Heart left ventricle (tissue), 16 donors: ENCODE measurements at regions of chr9 and their contacts with region 1.

Region 1: DNA sequence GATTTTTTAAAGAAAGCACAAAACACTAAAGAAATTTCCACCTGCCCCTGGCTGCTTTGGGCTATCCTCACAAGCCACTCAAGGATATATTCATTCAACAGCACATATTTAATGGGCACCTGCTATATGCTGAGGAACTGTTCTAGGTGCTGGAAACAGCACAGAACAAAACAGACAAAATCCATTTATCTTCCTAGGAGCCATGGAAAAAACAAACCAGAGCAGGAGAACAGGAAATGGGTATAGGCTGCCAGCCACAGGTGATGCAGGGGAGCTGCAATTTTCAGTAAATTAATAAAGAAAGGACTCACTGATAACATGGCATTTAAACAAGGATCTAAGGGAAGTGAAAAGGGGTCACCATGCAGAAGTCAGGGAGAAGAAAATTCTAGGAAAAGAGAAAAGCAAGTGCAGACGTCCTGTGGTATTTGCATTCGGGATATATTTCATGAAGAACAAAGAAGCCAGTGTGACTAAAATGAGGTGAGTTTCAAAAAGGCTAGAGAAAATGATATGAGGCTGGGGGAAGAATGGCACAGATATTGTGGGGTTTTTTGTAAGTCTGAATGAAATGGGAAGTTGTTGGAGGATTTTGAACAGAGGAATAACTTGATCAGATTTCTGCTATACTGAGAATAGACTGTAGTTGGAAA is 152.2 kb downstream of the ADAMTSL1 start:
- DNase-seq: no peak
- ATAC-seq: no peak
- H3K4me3 ChIP-seq: no peak overlapping the region
- H3K27ac ChIP-seq: no peak overlapping the region
- H3K4me1 ChIP-seq: peaks cover 0 to 13% (median 0%) of the 10 kb centered on the region in 12 donors
- H3K27me3 ChIP-seq: no peaks in the 10 kb centered on the region
- CTCF ChIP-seq: peak in 1 of 12 donors; percentile 48
- POLR2A ChIP-seq: no peak

Region 2: DNA sequence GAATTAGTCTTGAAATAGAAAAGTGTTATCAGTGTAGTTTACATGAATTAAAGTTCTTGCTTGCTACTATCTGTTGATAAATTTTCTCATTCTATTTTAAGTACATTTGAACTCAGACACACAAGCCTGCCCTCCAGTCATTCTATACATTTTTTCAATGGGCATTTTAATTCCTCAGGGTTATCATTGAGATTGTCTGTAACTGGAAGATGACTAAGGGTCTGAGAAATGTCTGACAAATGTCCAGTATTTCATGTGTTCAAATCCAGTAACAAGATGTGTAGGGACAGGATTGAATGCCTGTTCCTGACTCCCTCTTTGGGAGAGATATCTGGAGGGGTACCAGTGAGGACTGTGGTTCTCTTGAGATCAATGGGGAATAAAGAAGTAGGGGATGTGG is 376.1 kb before region 1 on chr9:
- intact Hi-C with region 1: loop called in 1 of 10 experiments (anchors 5 kb)
- DNase-seq: no peak
- ATAC-seq: no peak
- H3K4me3 ChIP-seq: no peak overlapping the region
- H3K27ac ChIP-seq: no peak overlapping the region
- H3K4me1 ChIP-seq: no peaks in the 10 kb centered on the region
- H3K27me3 ChIP-seq: no peaks in the 10 kb centered on the region
- CTCF ChIP-seq: no peak
- POLR2A ChIP-seq: no peak

Region 3: GRCh38 chr9:18442629-18443491 is 183.3 kb before region 1 on chr9:
- intact Hi-C with region 1: loop called in 1 of 10 experiments (anchors 10 kb)
- DNase-seq: peak; percentile 68 to 81 (median 72)
- ATAC-seq: peak; percentile 74 to 89 (median 81)
- H3K4me3 ChIP-seq: no peak overlapping the region
- H3K27ac ChIP-seq: peak overlapping the region in 1 of 12 donors; percentile 31
- H3K4me1 ChIP-seq: peaks cover 0 to 21% (median 11%) of the 10 kb centered on the region in 12 donors
- H3K27me3 ChIP-seq: no peaks in the 10 kb centered on the region
- CTCF ChIP-seq: peak; percentile 86 to 97 (median 92)
- POLR2A ChIP-seq: no peak

Region 4: GRCh38 chr9:18783909-18784308 is 157.7 kb after region 1 on chr9:
- intact Hi-C with region 1: loop called in 2 of 10 experiments (anchors 2 to 10 kb)
- DNase-seq: no peak
- ATAC-seq: no peak
- H3K4me3 ChIP-seq: no peak overlapping the region
- H3K27ac ChIP-seq: peak overlapping the region in 7 of 12 donors; percentile 22 to 88 (median 85)
- H3K4me1 ChIP-seq: peaks cover 0 to 57% (median 24%) of the 10 kb centered on the region in 12 donors
- H3K27me3 ChIP-seq: no peaks in the 10 kb centered on the region
- CTCF ChIP-seq: no peak
- POLR2A ChIP-seq: no peak

Region 5: DNA sequence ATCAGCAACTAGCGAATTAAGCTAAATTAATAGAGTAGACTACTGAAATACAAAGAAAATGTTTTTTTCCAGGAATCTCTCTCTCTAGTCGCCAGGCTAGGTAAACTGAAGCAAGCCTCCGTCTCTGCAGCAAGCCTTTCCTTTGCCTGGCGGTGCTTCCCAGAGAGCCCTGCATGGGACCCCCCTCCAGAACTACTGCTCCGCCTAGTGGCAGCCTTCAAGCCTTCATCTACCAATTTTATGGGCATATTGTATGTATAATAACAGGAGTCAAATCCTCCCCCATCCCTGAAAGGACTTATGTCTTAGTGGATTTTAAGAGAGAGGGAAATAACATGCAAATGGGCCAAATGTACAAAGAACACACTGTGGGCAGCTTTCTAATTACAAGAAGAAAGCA is 164.9 kb after region 1 on chr9:
- intact Hi-C with region 1: loop called in 2 of 10 experiments (anchors 10 kb)
- DNase-seq: no peak
- ATAC-seq: no peak
- H3K4me3 ChIP-seq: no peak overlapping the region
- H3K27ac ChIP-seq: no peak overlapping the region
- H3K4me1 ChIP-seq: peaks cover 0 to 39% (median 20%) of the 10 kb centered on the region in 12 donors
- H3K27me3 ChIP-seq: no peaks in the 10 kb centered on the region
- CTCF ChIP-seq: no peak
- POLR2A ChIP-seq: no peak